ENCODE measurements at regions of chr1 and their contacts with region 1.

Region 1: DNA sequence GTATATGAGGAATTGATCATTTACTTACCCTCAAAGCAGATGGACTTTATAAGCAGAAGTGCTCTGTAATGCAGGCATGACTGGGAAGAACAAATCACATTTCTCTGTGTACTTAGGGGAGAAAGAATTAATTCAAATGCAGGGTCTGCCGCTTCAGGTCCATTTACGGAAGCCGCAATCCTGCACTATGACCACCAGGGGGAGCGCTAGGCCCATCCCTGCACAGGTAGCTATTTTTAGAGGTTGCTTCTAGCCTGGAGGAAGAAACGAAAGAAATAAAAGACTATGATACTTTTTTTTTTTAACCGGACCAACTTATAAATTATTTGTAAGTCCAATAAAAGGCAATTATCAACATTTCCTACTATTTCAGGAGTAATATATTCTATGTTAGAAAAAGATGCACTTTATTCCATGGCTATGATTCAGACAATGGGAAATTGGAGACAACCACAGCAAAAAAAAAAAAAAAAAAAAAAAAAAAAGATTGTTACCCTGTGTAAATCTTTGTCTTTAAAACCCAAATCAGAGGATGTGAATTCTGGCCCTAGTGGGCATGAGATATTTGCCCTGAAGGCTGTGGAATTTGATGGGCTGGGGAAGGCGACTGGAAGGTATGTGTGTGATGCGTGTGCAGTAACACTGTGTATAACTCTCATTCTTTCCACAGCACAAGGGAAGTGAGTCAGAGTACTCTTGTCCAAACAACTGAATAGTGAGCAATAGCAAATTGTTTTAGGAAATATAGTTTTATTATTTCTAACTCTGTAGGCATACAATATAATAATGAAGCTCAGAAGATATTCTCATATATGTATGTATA is 12.9 kb upstream of the FYB2 start:
- DNase-seq: peak; percentile 74
- ATAC-seq: peak; percentile 62
- H3K4me3 ChIP-seq: no peak overlapping the region
- H3K4me3 Mint-ChIP-seq: no peak overlapping the region
- H3K27ac ChIP-seq: no peak overlapping the region
- H3K27ac Mint-ChIP-seq: no peak overlapping the region
- H3K4me1 ChIP-seq: no peaks in the 10 kb centered on the region
- H3K4me1 Mint-ChIP-seq: peaks cover 2% of the 10 kb centered on the region
- H3K27me3 ChIP-seq: no peaks in the 10 kb centered on the region
- H3K27me3 Mint-ChIP-seq: peaks cover 25% of the 10 kb centered on the region
- CTCF ChIP-seq: peak; percentile 98

Region 2: GRCh38 chr1:55959136-55959548 is 872.9 kb before region 1 on chr1:
- CTCF ChIA-PET with region 1: no interaction called
- POLR2A ChIA-PET with region 1: no interaction called
- intact Hi-C with region 1: no loop called
- DNase-seq: no peak
- ATAC-seq: no peak
- H3K4me3 ChIP-seq: no peak overlapping the region
- H3K4me3 Mint-ChIP-seq: no peak overlapping the region
- H3K27ac ChIP-seq: no peak overlapping the region
- H3K27ac Mint-ChIP-seq: no peak overlapping the region
- H3K4me1 ChIP-seq: no peaks in the 10 kb centered on the region
- H3K4me1 Mint-ChIP-seq: no peaks in the 10 kb centered on the region
- H3K27me3 ChIP-seq: no peaks in the 10 kb centered on the region
- H3K27me3 Mint-ChIP-seq: peaks cover 7% of the 10 kb centered on the region
- CTCF ChIP-seq: no peak

Region 3: DNA sequence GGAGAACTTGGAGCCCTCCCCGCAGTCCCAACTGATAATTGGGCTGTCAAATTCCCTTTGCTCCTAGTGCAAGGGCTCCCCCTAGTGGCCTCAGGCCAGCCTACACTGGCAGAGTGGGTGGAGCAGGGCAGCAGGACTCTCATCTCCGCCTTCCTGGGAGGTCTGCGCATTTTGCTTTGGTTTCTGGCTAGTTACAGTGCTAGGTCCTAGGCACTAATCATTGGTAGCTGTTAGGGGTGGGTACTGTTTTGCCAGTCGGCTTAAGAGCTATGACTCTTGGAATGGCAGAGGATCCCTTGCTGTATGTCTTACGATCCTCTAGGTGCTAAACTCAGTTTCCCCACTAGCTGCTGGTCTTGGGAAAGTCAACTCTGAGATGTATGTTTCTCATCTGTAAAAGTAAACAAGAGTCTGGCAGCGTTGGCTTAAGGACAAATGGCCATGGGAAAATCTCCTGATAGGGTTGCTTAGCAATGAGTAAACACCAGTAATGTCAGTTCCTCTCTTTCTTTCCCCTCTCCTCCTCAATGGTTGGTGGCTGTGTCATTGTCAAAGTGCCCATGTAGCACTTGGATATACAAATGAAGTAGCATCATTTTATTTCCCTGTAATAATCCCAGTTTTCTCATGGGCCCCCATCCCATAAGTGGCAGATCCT is 10.8 kb before region 1 on chr1:
- CTCF ChIA-PET with region 1: interaction called, 36 read pairs
- POLR2A ChIA-PET with region 1: no interaction called
- intact Hi-C with region 1: no loop called
- DNase-seq: peak; percentile 53
- ATAC-seq: peak; percentile 49
- H3K4me3 ChIP-seq: no peak overlapping the region
- H3K4me3 Mint-ChIP-seq: no peak overlapping the region
- H3K27ac ChIP-seq: no peak overlapping the region
- H3K27ac Mint-ChIP-seq: no peak overlapping the region
- H3K4me1 ChIP-seq: no peaks in the 10 kb centered on the region
- H3K4me1 Mint-ChIP-seq: no peaks in the 10 kb centered on the region
- H3K27me3 ChIP-seq: peaks cover 0 to 5% (median 4%) of the 10 kb centered on the region in 4 experiments
- H3K27me3 Mint-ChIP-seq: peaks cover 33% of the 10 kb centered on the region
- CTCF ChIP-seq: peak; percentile 82

Region 4: GRCh38 chr1:56844545-56845136 is 12.6 kb after region 1 on chr1:
- CTCF ChIA-PET with region 1: interaction called, 26 read pairs
- POLR2A ChIA-PET with region 1: no interaction called
- intact Hi-C with region 1: no loop called
- DNase-seq: no peak
- ATAC-seq: no peak
- H3K4me3 ChIP-seq: no peak overlapping the region
- H3K4me3 Mint-ChIP-seq: no peak overlapping the region
- H3K27ac ChIP-seq: no peak overlapping the region
- H3K27ac Mint-ChIP-seq: no peak overlapping the region
- H3K4me1 ChIP-seq: no peaks in the 10 kb centered on the region
- H3K4me1 Mint-ChIP-seq: no peaks in the 10 kb centered on the region
- H3K27me3 ChIP-seq: no peaks in the 10 kb centered on the region
- H3K27me3 Mint-ChIP-seq: peaks cover 25% of the 10 kb centered on the region
- CTCF ChIP-seq: no peak